IMR-90 (cell line): ENCODE measurements at regions of chr1 and their contacts with region 1.

Region 1: DNA sequence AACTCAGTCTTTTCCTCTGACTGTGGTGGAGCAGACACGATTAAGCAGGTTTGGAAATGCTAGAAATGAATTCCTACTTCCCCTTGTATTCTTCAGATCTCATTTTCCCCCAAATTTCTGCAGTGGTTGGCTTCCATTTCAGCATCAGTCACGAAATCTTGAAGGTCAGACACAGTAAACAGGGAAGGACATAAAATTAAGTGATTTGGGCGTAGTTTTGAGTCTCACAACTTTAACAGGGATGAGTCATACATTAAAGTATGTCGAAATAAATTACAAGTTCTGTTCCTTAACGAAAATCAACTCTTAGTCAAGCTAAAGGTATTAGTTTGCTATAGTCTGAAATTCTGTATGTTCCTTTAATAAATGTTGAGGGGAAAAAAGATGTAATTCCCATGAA is 61.1 kb downstream of the HNRNPR start:
- DNase-seq: peak; percentile 79
- ATAC-seq: peak; percentile 72
- H3K4me3 ChIP-seq: no peak overlapping the region
- H3K27ac ChIP-seq: peak overlapping the region; percentile 2; the same call in 1 of the 2 replicates
- H3K4me1 ChIP-seq: peaks cover 8% of the 10 kb centered on the region; the same call in 1 of the 2 replicates
- H3K27me3 ChIP-seq: no peaks in the 10 kb centered on the region
- CTCF ChIP-seq: no peak
- POLR2A ChIP-seq: no peak
- RAD21 ChIP-seq: no peak

Region 2: GRCh38 chr1:23081376-23081775 is 201.6 kb before region 1 on chr1:
- CTCF ChIA-PET with region 1: no interaction called
- POLR2A ChIA-PET with region 1: no interaction called
- dilution Hi-C with region 1: no loop called
- in situ Hi-C with region 1: loop called (anchors 5 kb)
- intact Hi-C with region 1: no loop called
- DNase-seq: no peak
- ATAC-seq: no peak
- H3K4me3 ChIP-seq: no peak overlapping the region
- H3K27ac ChIP-seq: no peak overlapping the region
- H3K4me1 ChIP-seq: peaks cover 2% of the 10 kb centered on the region
- H3K27me3 ChIP-seq: no peaks in the 10 kb centered on the region
- CTCF ChIP-seq: no peak
- POLR2A ChIP-seq: no peak
- RAD21 ChIP-seq: no peak

Region 3: GRCh38 chr1:23193390-23194118 is 89.4 kb before region 1 on chr1:
- CTCF ChIA-PET with region 1: no interaction called
- POLR2A ChIA-PET with region 1: no interaction called
- dilution Hi-C with region 1: no loop called
- in situ Hi-C with region 1: no loop called
- intact Hi-C with region 1: no loop called
- DNase-seq: no peak
- ATAC-seq: no peak
- H3K4me3 ChIP-seq: no peak overlapping the region
- H3K27ac ChIP-seq: peak overlapping the region; percentile 4; the same call in 1 of the 2 replicates
- H3K4me1 ChIP-seq: peaks cover 21% of the 10 kb centered on the region
- H3K27me3 ChIP-seq: no peaks in the 10 kb centered on the region
- CTCF ChIP-seq: no peak
- POLR2A ChIP-seq: no peak
- RAD21 ChIP-seq: no peak

Region 4: DNA sequence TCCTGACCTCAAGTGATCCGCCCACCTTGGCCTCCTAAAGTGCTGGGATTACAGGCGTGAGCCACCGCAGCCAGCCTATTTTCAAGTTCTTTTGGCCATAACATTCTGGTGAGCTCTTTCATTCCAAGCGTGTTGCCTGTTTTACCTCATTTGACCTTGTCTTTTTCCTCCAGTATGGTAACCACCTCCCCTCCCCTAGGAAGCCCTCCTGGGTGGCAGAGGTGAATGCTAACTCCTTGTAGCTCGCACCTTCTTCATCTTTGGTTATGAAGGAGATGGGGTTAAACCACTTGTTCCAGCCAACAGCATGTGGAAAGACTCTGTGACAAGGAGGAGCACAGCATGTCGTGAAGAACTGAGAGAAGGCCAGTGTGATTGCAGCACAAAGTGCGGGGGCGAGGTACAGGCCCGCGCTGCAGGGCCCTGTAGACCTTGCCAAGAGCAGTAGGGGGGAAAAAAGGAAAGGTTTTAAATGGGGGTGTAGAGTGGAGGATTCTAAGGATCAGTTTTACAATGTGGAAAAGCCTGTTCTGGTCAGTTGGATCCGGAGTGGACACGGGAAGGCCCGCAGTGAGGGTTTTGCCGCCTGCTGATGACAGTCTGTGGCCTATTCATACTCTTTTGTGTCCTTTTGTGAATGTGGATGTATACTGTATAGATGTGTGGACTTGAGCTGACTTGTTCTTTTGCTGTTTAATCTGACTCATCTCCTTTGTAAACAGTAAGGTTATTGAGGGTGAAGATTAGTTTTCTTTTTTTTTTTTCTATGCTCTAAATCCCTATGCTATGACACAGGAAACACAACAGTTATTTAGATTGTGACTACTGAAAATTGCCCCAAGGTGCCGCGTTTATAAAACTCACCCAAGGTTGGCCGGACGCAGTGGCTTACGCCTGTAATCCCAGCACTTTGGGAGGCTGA is 94.2 kb after region 1 on chr1:
- CTCF ChIA-PET with region 1: no interaction called
- POLR2A ChIA-PET with region 1: no interaction called
- dilution Hi-C with region 1: no loop called
- in situ Hi-C with region 1: no loop called
- intact Hi-C with region 1: no loop called
- DNase-seq: peak; percentile 90
- ATAC-seq: peak; percentile 96
- H3K4me3 ChIP-seq: no peak overlapping the region
- H3K27ac ChIP-seq: peak overlapping the region; percentile 77
- H3K4me1 ChIP-seq: peaks cover 5% of the 10 kb centered on the region
- H3K27me3 ChIP-seq: no peaks in the 10 kb centered on the region
- CTCF ChIP-seq: no peak
- POLR2A ChIP-seq: no peak
- RAD21 ChIP-seq: no peak

Region 5: DNA sequence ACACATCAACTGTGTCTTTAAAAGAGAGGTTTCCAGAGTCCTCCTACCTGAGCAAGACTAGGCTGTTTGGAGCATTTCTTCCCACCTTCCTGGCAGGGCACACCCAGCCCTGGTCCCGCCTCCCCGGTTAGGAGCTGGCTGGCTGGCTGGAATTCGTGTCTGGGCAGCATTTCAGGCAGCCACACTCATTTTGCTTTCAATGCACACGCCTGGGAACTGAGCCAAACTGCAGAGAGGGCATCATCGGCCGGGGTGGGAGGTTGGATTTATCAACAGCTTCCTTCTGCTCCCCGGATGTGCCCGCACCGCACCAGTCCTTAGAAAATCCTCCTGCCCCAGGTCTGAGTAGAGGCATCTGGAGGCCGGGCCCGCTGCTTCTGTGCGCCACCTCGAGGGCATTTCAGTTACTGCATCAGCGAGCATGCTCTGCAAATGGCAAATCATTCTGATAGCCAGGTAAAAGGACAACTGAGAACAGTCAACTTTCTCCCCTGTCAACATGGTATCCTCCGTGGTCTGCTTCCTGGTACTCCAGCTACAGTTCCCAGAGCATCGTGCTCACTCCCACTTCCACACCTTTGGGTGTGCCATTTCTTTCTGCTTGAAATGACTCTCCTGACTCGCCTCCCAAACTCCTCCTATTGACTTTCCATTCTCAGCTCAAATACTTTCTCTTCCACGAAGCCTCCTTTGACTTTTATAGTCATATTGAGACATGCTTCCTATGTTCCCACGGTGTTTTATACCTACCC is 121.0 kb after region 1 on chr1:
- CTCF ChIA-PET with region 1: no interaction called
- POLR2A ChIA-PET with region 1: no interaction called
- dilution Hi-C with region 1: no loop called
- in situ Hi-C with region 1: no loop called
- intact Hi-C with region 1: loop called (anchors 5 kb)
- DNase-seq: peak; percentile 89
- ATAC-seq: peak; percentile 89
- H3K4me3 ChIP-seq: no peak overlapping the region
- H3K27ac ChIP-seq: peak overlapping the region; percentile 23
- H3K4me1 ChIP-seq: peaks cover 21% of the 10 kb centered on the region
- H3K27me3 ChIP-seq: no peaks in the 10 kb centered on the region
- CTCF ChIP-seq: peak; percentile 89
- POLR2A ChIP-seq: no peak
- RAD21 ChIP-seq: peak; percentile 93